Activated CD4-positive, alpha-beta memory T cell treated with anti-CD3 and anti-CD28 coated beads for 36 hours (primary cell): ENCODE measurements at regions of chr1 and their contacts with region 1.

Region 1: DNA sequence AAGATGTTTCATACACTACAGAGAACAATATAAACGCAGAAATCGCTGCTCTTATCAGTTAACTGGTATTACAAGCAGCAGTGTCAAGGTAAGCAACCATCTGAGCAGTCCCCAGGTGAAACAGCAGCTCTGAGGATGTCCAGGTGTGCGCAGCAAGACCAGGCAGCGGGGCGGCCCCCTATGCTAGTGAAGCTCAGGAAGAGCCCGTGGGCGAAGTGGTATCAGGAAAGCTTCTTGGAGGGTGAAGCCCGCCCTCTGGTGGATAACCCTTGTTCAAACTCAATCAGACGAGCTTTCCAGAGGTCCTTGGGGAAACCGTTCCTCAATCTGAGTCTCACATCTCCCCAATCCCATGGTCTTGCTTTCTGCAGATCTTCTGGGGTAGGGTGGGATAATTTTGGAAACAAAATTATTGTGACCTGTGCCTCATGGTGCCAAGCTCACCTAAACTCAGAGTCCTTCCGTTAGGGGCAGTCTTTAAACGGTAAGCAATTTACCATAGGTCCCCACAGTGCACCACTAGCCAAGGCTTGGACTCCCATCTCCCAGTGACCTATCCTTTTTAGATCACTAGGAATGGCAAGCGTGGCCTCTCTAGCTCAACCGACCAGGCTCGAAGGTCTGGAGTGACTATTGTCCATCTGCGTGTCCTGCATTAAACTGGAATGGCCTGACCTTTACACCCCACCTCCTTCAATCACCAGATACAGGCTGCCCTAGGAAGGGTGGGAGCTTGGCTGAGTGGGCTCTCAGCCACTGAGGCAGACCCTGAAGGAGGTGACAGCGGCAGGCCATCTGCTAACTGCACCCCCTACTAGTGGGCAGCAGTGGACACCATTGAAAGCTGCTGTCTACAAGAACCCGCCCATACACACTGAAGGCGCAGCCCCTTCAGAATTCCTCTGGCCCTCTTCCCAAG is 13.6 kb upstream of the FAM110D start:
- DNase-seq: peak; percentile 83
- H3K4me3 Mint-ChIP-seq: no peak overlapping the region
- H3K27ac Mint-ChIP-seq: no peak overlapping the region
- H3K4me1 Mint-ChIP-seq: peaks cover 4% of the 10 kb centered on the region
- H3K27me3 Mint-ChIP-seq: no peaks in the 10 kb centered on the region

Region 2: DNA sequence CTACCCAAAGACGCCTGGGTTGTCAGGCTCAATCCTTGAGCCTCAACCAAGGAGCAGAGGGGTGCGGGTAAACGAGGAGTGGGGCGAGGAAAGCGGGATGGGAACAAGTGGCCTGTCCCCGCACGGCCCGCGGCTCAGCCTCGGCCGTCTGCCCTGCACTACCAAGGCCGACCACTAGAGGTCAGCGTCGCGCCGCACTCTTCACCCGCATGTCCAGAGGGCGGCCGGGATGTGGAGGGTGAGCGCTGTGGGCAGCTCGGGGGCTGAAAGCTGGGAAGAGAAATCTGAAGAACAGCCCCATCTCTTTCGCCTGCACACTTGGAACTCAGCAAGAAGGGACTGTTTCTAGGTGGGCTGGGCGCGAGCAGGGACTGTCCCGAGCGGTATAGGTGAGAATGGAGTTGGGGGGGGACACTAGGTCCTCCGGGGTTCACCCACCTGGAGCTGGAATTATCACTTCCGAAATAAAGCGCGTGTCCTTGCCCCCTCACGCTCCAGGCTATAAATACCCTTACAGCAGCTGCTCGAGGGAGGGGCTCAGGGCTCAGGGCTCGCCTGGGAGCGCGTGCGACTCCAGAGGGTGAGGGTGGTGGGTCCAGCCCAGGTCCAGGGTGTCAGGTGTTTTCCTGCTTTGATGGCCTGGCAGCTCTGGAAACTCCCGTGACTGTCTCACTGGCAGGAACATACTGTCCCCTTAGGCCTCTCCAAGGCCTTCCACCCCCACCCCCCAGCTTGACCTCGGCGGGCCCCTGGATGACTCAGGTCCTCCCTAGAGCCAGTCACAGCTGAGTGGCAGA is 109.1 kb before region 1 on chr1:
- CTCF ChIA-PET with region 1: interaction called, 52 read pairs
- POLR2A ChIA-PET with region 1: interaction called, 3 read pairs
- intact Hi-C with region 1: loop called (anchors 1 kb)
- DNase-seq: peak; percentile 84
- H3K4me3 Mint-ChIP-seq: peak overlapping the region; percentile 91
- H3K27ac Mint-ChIP-seq: no peak overlapping the region
- H3K4me1 Mint-ChIP-seq: peaks cover 11% of the 10 kb centered on the region
- H3K27me3 Mint-ChIP-seq: peaks cover 5% of the 10 kb centered on the region

Region 3: GRCh38 chr1:26111530-26112406 is 33.5 kb before region 1 on chr1 and contains the start of gene PDIK1L:
- CTCF ChIA-PET with region 1: interaction called, 36 read pairs
- POLR2A ChIA-PET with region 1: interaction called, 3 read pairs
- intact Hi-C with region 1: no loop called
- DNase-seq: peak; percentile 96
- H3K4me3 Mint-ChIP-seq: peak within 1 kb of the TSS; percentile 97
- H3K27ac Mint-ChIP-seq: peak within 1 kb of the TSS; percentile 93
- H3K4me1 Mint-ChIP-seq: peaks cover 28% of the 10 kb centered on the region
- H3K27me3 Mint-ChIP-seq: no peaks in the 10 kb centered on the region
- total RNA-seq, gene PDIK1L: 14.9 to 15.2 TPM

Region 4: GRCh38 chr1:26126321-26127084 is 18.8 kb before region 1 on chr1:
- CTCF ChIA-PET with region 1: interaction called, 52 read pairs
- POLR2A ChIA-PET with region 1: no interaction called
- intact Hi-C with region 1: loop called (anchors 2 kb)
- DNase-seq: peak; percentile 57
- H3K4me3 Mint-ChIP-seq: peak overlapping the region; percentile 58
- H3K27ac Mint-ChIP-seq: peak overlapping the region; percentile 89
- H3K4me1 Mint-ChIP-seq: peaks cover 49% of the 10 kb centered on the region
- H3K27me3 Mint-ChIP-seq: no peaks in the 10 kb centered on the region

Region 5: GRCh38 chr1:26161415-26162219 is 16.3 kb after region 1 on chr1:
- CTCF ChIA-PET with region 1: interaction called, 20 read pairs
- POLR2A ChIA-PET with region 1: no interaction called
- intact Hi-C with region 1: no loop called
- DNase-seq: peak; percentile 50
- H3K4me3 Mint-ChIP-seq: peak overlapping the region; percentile 24
- H3K27ac Mint-ChIP-seq: no peak overlapping the region
- H3K4me1 Mint-ChIP-seq: peaks cover 10% of the 10 kb centered on the region
- H3K27me3 Mint-ChIP-seq: peaks cover 31% of the 10 kb centered on the region

Region 6: GRCh38 chr1:26279456-26280332 is 134.4 kb after region 1 on chr1 and contains the start of gene SH3BGRL3:
- CTCF ChIA-PET with region 1: no interaction called
- POLR2A ChIA-PET with region 1: no interaction called
- intact Hi-C with region 1: no loop called
- DNase-seq: peak; percentile 89
- H3K4me3 Mint-ChIP-seq: peak within 1 kb of the TSS; percentile 89
- H3K27ac Mint-ChIP-seq: peak within 1 kb of the TSS; percentile 94
- H3K4me1 Mint-ChIP-seq: peaks cover 87% of the 10 kb centered on the region
- H3K27me3 Mint-ChIP-seq: no peaks in the 10 kb centered on the region
- total RNA-seq, gene SH3BGRL3: 305 to 320 TPM

Region 7: GRCh38 chr1:26459573-26460031 is 314.3 kb after region 1 on chr1:
- CTCF ChIA-PET with region 1: no interaction called
- POLR2A ChIA-PET with region 1: no interaction called
- intact Hi-C with region 1: no loop called
- DNase-seq: no peak
- H3K4me3 Mint-ChIP-seq: no peak overlapping the region
- H3K27ac Mint-ChIP-seq: no peak overlapping the region
- H3K4me1 Mint-ChIP-seq: no peaks in the 10 kb centered on the region
- H3K27me3 Mint-ChIP-seq: no peaks in the 10 kb centered on the region